CD8-positive, alpha-beta T cell (primary cell): ENCODE measurements at regions of chr5 and their contacts with region 1.

Region 1: DNA sequence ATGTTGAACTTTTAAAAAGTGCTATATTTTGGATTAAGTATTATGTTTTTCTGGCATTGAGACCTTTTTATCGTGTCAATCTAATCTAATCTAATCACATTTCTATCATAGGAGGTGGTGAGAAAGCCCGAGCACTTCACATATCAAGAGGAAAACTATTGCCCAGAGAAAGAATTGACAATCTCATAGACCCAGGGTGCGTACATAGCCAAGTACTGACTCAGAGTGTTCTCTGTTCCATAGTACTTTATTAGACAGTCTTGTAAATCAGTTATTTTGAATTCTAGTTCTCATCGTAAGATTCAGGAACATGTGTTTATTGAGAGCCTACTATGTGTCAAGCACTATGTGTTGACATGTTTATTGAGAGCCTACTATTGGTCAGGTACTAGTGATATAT is 9.0 kb downstream of the MCCC2 start:
- DNase-seq: no peak
- ATAC-seq: no peak
- H3K4me3 ChIP-seq: no peak overlapping the region
- H3K4me3 Mint-ChIP-seq: no peak overlapping the region
- H3K27ac ChIP-seq: no peak overlapping the region
- H3K27ac Mint-ChIP-seq: no peak overlapping the region
- H3K4me1 ChIP-seq: peaks cover 8% of the 10 kb centered on the region
- H3K4me1 Mint-ChIP-seq: peaks cover 14% of the 10 kb centered on the region
- H3K27me3 ChIP-seq: no peaks in the 10 kb centered on the region
- H3K27me3 Mint-ChIP-seq: no peaks in the 10 kb centered on the region
- CTCF ChIP-seq: no peak

Region 2: GRCh38 chr5:71757590-71758543 is 161.7 kb after region 1 on chr5:
- CTCF ChIA-PET with region 1: no interaction called
- POLR2A ChIA-PET with region 1: no interaction called
- intact Hi-C with region 1: no loop called
- DNase-seq: peak in 7 of 9 experiments; percentile 21 to 66 (median 39)
- ATAC-seq: peak; percentile 78
- H3K4me3 ChIP-seq: peak overlapping the region in 1 of 2 experiments; percentile 16
- H3K4me3 Mint-ChIP-seq: peak overlapping the region; percentile 49
- H3K27ac ChIP-seq: no peak overlapping the region
- H3K27ac Mint-ChIP-seq: peak overlapping the region; percentile 39
- H3K4me1 ChIP-seq: peaks cover 4% of the 10 kb centered on the region
- H3K4me1 Mint-ChIP-seq: peaks cover 9% of the 10 kb centered on the region
- H3K27me3 ChIP-seq: no peaks in the 10 kb centered on the region
- H3K27me3 Mint-ChIP-seq: peaks cover 2% of the 10 kb centered on the region
- CTCF ChIP-seq: no peak

Region 3: DNA sequence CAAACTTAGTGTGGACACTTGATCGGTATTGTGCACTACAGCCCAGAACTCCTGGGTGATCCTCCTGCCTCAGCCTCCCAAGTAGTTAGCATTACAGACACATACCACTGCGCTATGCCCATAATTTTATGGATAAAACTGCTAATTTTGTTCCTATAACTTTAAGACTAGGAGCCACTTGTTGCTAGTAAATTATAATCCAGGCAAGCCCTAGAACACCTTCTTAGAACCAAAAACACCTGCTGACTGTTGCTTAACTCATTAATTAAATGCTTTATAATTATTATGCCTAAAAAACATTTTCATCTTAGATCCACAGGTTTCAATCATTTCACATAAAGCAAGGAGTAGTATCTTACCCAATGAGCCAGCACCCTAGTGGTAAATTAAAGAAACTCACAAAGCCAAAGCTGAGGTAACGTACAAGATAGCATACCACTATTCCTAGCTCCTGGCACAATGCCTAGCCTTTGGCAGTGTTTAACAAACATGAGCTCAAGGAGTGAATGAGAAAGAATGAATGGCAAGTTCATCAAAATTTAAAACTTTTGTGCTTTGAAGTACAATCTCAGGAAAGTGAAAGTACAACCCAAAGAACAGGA is 718.5 kb after region 1 on chr5:
- CTCF ChIA-PET with region 1: no interaction called
- POLR2A ChIA-PET with region 1: no interaction called
- intact Hi-C with region 1: loop called in 1 of 2 experiments (anchors 5 kb)
- DNase-seq: no peak
- ATAC-seq: no peak
- H3K4me3 ChIP-seq: no peak overlapping the region
- H3K4me3 Mint-ChIP-seq: no peak overlapping the region
- H3K27ac ChIP-seq: no peak overlapping the region
- H3K27ac Mint-ChIP-seq: no peak overlapping the region
- H3K4me1 ChIP-seq: peaks cover 14% of the 10 kb centered on the region
- H3K4me1 Mint-ChIP-seq: peaks cover 35% of the 10 kb centered on the region
- H3K27me3 ChIP-seq: no peaks in the 10 kb centered on the region
- H3K27me3 Mint-ChIP-seq: no peaks in the 10 kb centered on the region
- CTCF ChIP-seq: no peak